ENCODE measurements at regions of chr14 and their contacts with region 1.

Region 1: GRCh38 chr14:74955229-74956026 is at the start of gene PGF:
- DNase-seq: peak; percentile 74 to 88
- H3K4me3 ChIP-seq: peak within 1 kb of the TSS; percentile 53 to 59 (median 55)
- H3K27ac ChIP-seq: peak within 1 kb of the TSS in 3 of 5 donors; percentile 24 to 56 (median 49)
- H3K4me1 ChIP-seq: peaks cover 36 to 42% (median 38%) of the 10 kb centered on the region in 4 donors
- H3K27me3 ChIP-seq: peaks cover 0 to 43% (median 18%) of the 10 kb centered on the region in 3 donors
- CTCF ChIP-seq: no peak
- EP300 ChIP-seq: no peak
- POLR2A ChIP-seq: no peak
- total RNA-seq, gene PGF: 1.8 to 13.3 (median 8.1) TPM in 4 of 5 donors, not detected in the other

Region 2: DNA sequence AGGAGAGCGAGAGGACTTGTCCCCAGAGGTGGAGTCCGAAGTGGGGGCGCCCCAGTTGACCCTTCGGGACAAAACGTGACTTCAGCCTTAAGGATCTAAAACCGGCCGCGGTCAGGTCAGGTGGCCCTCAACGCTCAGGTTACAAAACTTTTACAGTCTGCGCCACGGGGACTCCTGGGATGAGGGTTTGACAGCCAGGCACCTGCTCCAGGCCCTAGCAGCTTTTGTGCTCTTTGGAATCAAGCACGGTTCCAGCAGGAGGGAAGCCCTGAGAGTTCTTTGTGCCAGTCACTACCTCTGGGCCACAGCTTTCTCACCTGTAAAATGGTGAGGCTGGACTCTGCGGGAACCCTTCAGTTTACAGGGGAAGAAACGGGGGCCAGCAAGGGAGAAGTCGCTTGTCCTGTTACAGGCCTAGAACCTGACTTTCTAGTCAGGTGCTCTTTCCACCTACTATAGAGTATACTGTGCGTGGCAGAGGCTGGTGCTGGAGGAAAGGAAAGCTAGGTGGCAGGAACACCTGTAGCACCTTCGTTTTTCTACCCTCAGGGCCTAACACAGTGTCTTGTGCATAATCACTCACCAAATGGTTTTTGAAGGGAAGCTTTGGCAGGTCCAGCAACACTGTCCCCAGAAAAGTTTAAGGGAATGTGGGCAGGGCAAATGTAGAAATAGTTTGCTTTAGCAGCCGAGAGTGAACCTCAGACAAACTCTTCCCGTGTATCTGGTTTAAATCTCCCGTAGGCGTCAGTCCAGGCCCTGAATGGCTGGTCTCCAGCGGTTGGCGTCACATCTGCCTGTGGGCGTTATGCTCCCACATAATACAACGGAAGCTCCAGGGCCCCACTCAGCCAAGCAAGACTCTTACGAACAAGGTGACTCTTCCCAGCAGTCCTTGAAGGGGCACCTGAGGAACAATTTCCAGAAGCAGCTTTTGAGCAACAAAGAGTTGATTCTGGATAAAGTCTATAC is 114.7 kb after region 1 on chr14:
- intact Hi-C with region 1: loop called (anchors 10 kb)
- DNase-seq: peak in 1 of 2 donors; percentile 75
- H3K4me3 ChIP-seq: peak overlapping the region; percentile 49 to 60 (median 58)
- H3K27ac ChIP-seq: peak overlapping the region; percentile 86 to 94 (median 91)
- H3K4me1 ChIP-seq: peaks cover 19 to 27% (median 24%) of the 10 kb centered on the region in 4 donors
- H3K27me3 ChIP-seq: no peaks in the 10 kb centered on the region
- CTCF ChIP-seq: no peak
- EP300 ChIP-seq: peak; percentile 10
- POLR2A ChIP-seq: no peak